ENCODE measurements at regions of chr1 and their contacts with region 1.

Region 1: DNA sequence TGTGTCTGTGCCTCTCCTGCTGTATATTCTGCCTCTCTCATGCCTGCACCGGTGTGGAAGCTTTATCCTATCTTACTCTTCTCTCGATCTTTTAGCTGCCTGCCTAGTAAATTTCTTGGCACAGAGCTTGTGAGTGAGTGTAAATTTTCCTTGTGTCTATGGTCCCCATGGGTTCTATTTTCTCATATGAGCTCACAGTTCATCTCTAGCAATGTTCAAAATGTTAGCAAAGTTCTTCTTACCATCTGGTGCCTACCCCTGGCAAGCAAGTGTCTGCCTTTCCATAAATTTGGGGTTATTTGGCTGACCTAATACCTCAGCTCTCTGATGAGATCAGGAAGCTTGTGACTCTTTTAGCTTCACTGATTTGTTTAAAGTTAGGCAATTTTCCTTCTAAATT is 572.1 kb upstream of the BRINP3 start:
- DNase-seq: no peak
- H3K4me3 ChIP-seq: no peak overlapping the region
- H3K27ac ChIP-seq: no peak overlapping the region
- H3K4me1 ChIP-seq: no peaks in the 10 kb centered on the region
- H3K27me3 ChIP-seq: no peaks in the 10 kb centered on the region
- CTCF ChIP-seq: no peak
- POLR2A ChIP-seq: no peak

Region 2: GRCh38 chr1:190908691-190909090 is 141.1 kb before region 1 on chr1:
- intact Hi-C with region 1: no loop called
- DNase-seq: no peak
- H3K4me3 ChIP-seq: no peak overlapping the region
- H3K27ac ChIP-seq: no peak overlapping the region
- H3K4me1 ChIP-seq: no peaks in the 10 kb centered on the region
- H3K27me3 ChIP-seq: no peaks in the 10 kb centered on the region
- CTCF ChIP-seq: no peak
- POLR2A ChIP-seq: no peak

Region 3: DNA sequence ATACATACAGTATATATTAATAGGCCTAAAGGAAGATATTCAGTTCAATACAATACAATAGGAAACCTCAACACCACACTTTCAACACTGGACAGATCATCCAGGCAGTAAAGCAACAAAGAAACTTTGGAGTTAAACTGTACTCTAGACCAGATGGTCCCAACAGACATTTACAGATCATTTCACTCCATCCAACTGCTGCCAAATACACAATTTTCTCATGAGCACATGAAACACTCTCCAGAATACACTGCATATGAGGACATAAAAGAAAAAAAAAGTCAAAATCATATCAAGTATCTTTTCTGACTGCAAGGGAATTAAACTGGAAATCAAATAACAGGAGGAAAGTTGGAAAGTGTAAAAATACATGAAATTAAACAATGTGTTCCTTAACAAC is 35.3 kb after region 1 on chr1:
- intact Hi-C with region 1: loop called (anchors 2 kb)
- DNase-seq: no peak
- H3K4me3 ChIP-seq: no peak overlapping the region
- H3K27ac ChIP-seq: no peak overlapping the region
- H3K4me1 ChIP-seq: no peaks in the 10 kb centered on the region
- H3K27me3 ChIP-seq: no peaks in the 10 kb centered on the region
- CTCF ChIP-seq: no peak
- POLR2A ChIP-seq: no peak